T-cell (primary cell): ENCODE measurements at regions of chr2 and their contacts with region 1.

Region 1: GRCh38 chr2:71331581-71332434 is at the start of gene ZNF638:
- DNase-seq: peak; percentile 79 to 98 (median 91)
- ATAC-seq: peak; percentile 95 to 98 (median 98)
- H3K4me3 ChIP-seq: peak within 1 kb of the TSS; percentile 81 to 85
- H3K4me3 Mint-ChIP-seq: peak within 1 kb of the TSS; percentile 99 to 100 (median 100)
- H3K27ac ChIP-seq: peak within 1 kb of the TSS; percentile 89
- H3K27ac Mint-ChIP-seq: peak within 1 kb of the TSS; percentile 99 to 100
- H3K4me1 ChIP-seq: peaks cover 13 to 17% of the 10 kb centered on the region in 2 experiments
- H3K4me1 Mint-ChIP-seq: peaks cover 39 to 52% (median 50%) of the 10 kb centered on the region in 3 donors
- H3K27me3 ChIP-seq: no peaks in the 10 kb centered on the region
- H3K27me3 Mint-ChIP-seq: peaks cover 0 to 1% of the 10 kb centered on the region in 2 donors
- total RNA-seq, gene ZNF638: 112 to 144 (median 131) TPM

Region 2: GRCh38 chr2:71226965-71227560 is 104.7 kb before region 1 on chr2 and contains the start of gene PAIP2B:
- CTCF ChIA-PET with region 1: interaction called in 1 of 2 experiments, 25 read pairs
- POLR2A ChIA-PET with region 1: interaction called in 1 of 2 experiments, 20 read pairs
- DNase-seq: peak; percentile 95 to 99 (median 98)
- ATAC-seq: peak; percentile 90 to 93 (median 92)
- H3K4me3 ChIP-seq: peak within 1 kb of the TSS; percentile 73 to 77
- H3K4me3 Mint-ChIP-seq: peak within 1 kb of the TSS; percentile 84 to 98 (median 94)
- H3K27ac ChIP-seq: peak within 1 kb of the TSS; percentile 42
- H3K27ac Mint-ChIP-seq: peak within 1 kb of the TSS; percentile 89 to 98
- H3K4me1 ChIP-seq: peaks cover 4 to 17% of the 10 kb centered on the region in 2 experiments
- H3K4me1 Mint-ChIP-seq: peaks cover 21 to 23% (median 22%) of the 10 kb centered on the region in 3 donors
- H3K27me3 ChIP-seq: peaks cover 0 to 3% of the 10 kb centered on the region in 2 experiments
- H3K27me3 Mint-ChIP-seq: peaks cover 10 to 12% of the 10 kb centered on the region in 2 donors
- total RNA-seq, gene PAIP2B: 4.8 to 10.1 (median 8.4) TPM

Region 3: DNA sequence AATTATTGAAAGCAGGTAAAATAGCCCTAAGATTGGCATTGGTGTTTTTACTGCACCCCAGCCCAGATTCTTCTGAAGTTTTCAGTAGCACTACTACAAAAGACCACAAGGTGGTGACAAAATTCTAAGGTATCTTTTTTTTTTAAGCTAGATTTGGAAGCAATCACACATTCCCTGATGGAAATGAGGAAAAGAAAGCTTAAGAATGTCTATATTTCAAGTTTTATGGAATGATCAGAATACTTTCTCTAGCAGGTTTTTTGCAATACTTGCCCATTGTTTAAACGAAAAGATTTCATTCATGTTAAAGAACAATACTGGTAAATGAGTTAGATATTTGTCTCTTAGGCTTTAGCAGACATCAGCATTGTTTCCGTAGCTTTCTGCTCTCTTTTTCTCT is 32.3 kb before region 1 on chr2:
- CTCF ChIA-PET with region 1: interaction called, 8 to 66 read pairs
- POLR2A ChIA-PET with region 1: interaction called in 1 of 2 experiments, 8 read pairs
- DNase-seq: peak in 2 of 35 experiments; percentile 13 to 65
- ATAC-seq: no peak
- H3K4me3 ChIP-seq: no peak overlapping the region
- H3K4me3 Mint-ChIP-seq: no peak overlapping the region
- H3K27ac ChIP-seq: no peak overlapping the region
- H3K27ac Mint-ChIP-seq: no peak overlapping the region
- H3K4me1 ChIP-seq: no peaks in the 10 kb centered on the region
- H3K4me1 Mint-ChIP-seq: no peaks in the 10 kb centered on the region
- H3K27me3 ChIP-seq: peaks cover 0 to 8% of the 10 kb centered on the region in 2 experiments
- H3K27me3 Mint-ChIP-seq: peaks cover 4 to 5% of the 10 kb centered on the region in 2 donors

Region 4: DNA sequence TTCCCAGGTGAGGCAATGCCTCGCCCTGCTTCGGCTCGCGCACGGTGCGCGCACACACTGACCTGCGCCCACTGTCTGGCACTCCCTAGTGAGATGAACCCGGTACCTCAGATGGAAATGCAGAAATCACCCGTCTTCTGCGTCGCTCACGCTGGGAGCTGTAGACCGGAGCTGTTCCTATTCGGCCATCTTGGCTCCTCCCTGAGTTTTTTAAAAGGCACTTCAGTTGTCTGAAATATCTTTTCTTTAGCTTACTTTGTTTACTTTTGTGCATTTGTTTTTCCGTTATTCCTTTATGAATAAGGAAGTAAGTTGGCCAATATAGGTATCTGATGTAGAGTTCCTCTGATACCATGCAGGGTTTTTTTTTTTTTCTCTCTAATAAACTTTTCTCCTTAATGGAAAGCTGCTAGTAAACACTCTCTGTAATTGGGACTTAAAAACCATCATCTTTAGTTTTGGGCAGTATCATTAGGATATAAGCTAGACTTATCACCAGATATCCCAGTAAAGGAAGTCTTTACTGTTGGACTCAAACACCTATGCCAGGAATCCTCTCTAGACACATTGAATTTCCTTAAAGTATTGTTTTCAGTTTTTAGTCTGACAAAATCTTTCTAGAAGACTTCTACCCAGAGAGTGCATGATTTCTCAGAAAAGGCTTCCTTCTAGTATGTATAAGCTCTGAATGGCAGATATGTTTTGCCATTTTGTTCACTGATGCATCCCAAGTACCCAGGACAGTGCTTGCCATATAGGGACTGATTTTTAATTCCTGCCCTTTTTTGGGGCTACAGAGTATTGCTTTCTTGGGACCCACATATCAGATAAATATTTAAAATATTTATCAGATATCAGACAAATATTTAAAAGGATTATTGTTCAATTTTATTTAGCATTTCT is 85.7 kb after region 1 on chr2:
- CTCF ChIA-PET with region 1: interaction called, 10 to 16 read pairs
- POLR2A ChIA-PET with region 1: interaction called, 5 to 11 read pairs
- DNase-seq: peak in 4 of 35 experiments; percentile 0 to 58 (median 6)
- ATAC-seq: peak in 3 of 4 experiments; percentile 47 to 66 (median 52)
- H3K4me3 ChIP-seq: peak overlapping the region in 1 of 2 donors; percentile 34
- H3K4me3 Mint-ChIP-seq: peak overlapping the region; percentile 82 to 85 (median 83)
- H3K27ac ChIP-seq: peak overlapping the region; percentile 73
- H3K27ac Mint-ChIP-seq: peak overlapping the region; percentile 87 to 94
- H3K4me1 ChIP-seq: peaks cover 0 to 2% of the 10 kb centered on the region in 2 experiments
- H3K4me1 Mint-ChIP-seq: peaks cover 11 to 21% (median 15%) of the 10 kb centered on the region in 3 donors
- H3K27me3 ChIP-seq: no peaks in the 10 kb centered on the region
- H3K27me3 Mint-ChIP-seq: no peaks in the 10 kb centered on the region

Region 5: DNA sequence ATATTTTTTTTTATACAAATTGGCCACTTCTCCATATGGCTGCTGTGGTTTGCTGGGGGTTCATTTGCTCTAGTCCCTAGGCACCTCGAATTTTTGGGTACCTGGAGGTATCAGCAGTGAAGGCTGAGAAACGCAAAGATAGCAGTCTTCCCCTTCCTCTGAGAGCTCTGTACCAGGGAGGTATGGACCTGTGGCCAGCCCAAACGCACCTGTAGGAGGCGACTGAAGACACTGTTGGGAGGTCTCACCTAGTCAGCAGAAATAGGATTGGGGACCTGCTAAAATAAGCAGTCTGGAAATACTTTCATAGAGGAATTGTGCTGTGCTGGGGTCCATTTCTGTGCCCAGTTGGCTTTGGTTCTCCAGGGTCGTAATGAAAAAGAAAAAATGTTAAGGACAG is 1108.1 kb after region 1 on chr2:
- CTCF ChIA-PET with region 1: no interaction called
- POLR2A ChIA-PET with region 1: no interaction called
- DNase-seq: no peak
- ATAC-seq: no peak
- H3K4me3 ChIP-seq: no peak overlapping the region
- H3K4me3 Mint-ChIP-seq: no peak overlapping the region
- H3K27ac ChIP-seq: no peak overlapping the region
- H3K27ac Mint-ChIP-seq: no peak overlapping the region
- H3K4me1 ChIP-seq: no peaks in the 10 kb centered on the region
- H3K4me1 Mint-ChIP-seq: peaks cover 1 to 7% (median 5%) of the 10 kb centered on the region in 3 donors
- H3K27me3 ChIP-seq: no peaks in the 10 kb centered on the region
- H3K27me3 Mint-ChIP-seq: no peaks in the 10 kb centered on the region